ENCODE measurements at regions of chr4 and their contacts with region 1.

Region 1: DNA sequence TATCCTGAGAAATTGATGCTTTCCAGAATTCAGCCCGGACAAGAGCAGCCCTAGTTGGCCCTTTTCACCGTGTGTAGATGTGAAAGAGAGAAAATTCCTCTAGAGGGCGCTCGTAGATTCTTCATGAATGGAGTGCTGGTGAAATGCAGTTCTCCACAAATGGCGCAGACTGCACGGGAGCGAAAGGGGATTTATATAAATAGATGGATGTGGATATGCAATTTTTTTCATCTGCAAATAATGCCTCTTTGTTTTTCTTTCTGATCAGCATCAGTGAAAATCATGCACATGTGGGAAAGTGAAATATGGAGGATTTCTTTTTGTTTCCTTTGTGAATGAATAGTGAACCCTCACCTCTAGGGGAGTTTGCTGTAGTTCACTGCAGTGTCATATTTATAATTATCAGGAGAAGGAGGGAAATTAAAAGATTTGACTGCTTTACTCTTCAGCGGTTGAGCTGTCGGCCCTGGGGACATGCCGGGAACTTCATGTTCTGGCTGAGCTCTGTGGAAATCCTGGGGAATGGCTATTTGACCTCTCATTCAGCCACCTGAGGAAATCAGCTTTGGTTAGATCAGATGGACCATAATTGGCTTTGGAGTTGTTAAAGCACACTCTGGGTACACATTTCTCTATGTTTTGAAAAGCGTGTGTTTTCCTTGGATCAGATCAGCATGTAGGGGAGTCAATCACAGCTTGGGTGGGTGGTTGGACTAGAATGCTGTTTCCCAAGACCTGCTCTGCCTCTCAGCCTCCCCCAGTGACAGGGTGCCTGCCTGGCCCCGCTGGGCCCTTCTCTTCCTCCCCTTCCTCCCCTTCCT is 115.0 kb upstream of the SHISA3 start:
- DNase-seq: peak; percentile 33
- ATAC-seq: peak; percentile 89
- H3K4me3 ChIP-seq: no peak overlapping the region
- H3K27ac ChIP-seq: no peak overlapping the region
- H3K4me1 ChIP-seq: peaks cover 28% of the 10 kb centered on the region
- H3K27me3 ChIP-seq: no peaks in the 10 kb centered on the region
- CTCF ChIP-seq: peak; percentile 66 to 76 (median 74)
- EP300 ChIP-seq: no peak
- POLR2A ChIP-seq: no peak
- RAD21 ChIP-seq: peak; percentile 94

Region 2: DNA sequence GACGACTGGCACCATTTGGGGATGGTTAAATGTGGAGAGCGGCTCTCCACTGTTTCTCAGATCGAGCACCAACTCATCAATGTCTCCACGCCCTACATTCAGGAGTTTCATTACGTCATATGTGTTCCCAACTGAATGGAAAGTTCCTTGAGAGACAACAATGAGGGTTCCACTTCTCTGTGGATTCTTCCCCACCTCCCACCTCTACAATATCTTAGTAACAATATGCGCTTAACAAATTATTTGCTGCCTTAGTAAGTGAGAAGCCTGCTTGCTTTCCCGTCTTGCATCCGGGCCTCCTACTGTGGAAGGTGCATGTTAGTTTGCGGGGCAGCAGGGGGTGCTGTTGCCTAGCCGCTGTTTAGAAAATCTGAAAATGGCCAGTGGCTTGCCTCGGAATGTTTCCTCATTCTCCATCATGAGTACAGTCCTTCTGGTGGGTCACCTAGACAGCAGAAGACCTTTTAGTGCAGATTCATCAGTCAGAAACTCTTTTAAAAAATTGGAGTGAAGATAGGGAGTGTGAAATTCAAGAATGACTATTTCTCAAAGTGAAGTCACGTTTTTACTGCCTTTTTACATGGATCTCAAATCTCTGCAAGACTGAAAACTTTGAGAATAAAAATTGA is 589.5 kb before region 1 on chr4:
- CTCF ChIA-PET with region 1: no interaction called
- POLR2A ChIA-PET with region 1: no interaction called
- RAD21 ChIA-PET with region 1: no interaction called
- SMC1A ChIA-PET with region 1: no interaction called
- in situ Hi-C with region 1: no loop called
- intact Hi-C with region 1: loop called (anchors 5 kb)
- DNase-seq: no peak
- ATAC-seq: peak; percentile 88
- H3K4me3 ChIP-seq: no peak overlapping the region
- H3K27ac ChIP-seq: no peak overlapping the region
- H3K4me1 ChIP-seq: no peaks in the 10 kb centered on the region
- H3K27me3 ChIP-seq: no peaks in the 10 kb centered on the region
- CTCF ChIP-seq: peak; percentile 88 to 94 (median 89)
- EP300 ChIP-seq: no peak
- POLR2A ChIP-seq: no peak
- RAD21 ChIP-seq: peak; percentile 94

Region 3: DNA sequence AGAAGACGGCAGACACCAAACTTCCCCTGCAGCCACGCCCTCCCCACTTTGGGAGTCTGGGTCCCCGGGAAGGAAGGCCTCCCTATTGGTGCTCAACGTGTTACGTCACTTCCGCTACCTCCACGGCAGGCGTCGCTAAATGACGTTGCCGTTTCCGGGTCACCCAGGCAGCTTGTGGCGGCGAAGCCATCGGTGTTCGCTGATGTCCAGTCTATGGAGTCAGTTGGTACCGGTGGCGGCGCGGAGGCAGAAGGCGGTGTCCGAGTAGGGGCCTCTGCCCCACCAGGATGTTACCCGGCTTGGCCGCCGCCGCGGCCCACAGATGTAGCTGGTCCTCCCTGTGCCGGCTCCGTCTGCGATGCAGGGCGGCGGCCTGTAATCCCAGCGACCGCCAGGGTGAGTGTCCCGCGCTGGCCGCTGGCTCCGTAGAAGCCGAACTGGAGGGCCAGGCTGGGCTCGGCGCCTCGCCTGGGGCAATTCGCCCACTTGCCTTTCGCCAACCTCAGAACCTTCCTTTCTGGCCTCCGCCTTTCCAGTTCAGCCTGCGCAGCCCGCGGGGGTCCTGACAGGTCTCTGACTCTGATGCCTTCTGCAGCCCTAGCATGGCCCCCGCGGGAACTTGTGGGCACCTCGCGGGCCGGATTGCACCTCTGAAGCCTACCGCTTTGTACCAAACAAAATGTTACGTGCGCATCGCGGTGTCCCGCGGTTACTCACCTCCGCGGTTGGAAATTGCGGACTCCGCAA is 291.8 kb before region 1 on chr4 and contains the start of gene SLC30A9:
- CTCF ChIA-PET with region 1: interaction called, 3 read pairs
- POLR2A ChIA-PET with region 1: no interaction called
- RAD21 ChIA-PET with region 1: no interaction called
- SMC1A ChIA-PET with region 1: no interaction called
- in situ Hi-C with region 1: no loop called
- intact Hi-C with region 1: loop called (anchors 5 kb)
- DNase-seq: peak; percentile 82
- ATAC-seq: peak; percentile 95
- H3K4me3 ChIP-seq: peak within 1 kb of the TSS; percentile 82
- H3K27ac ChIP-seq: peak within 1 kb of the TSS; percentile 74
- H3K4me1 ChIP-seq: no peaks in the 10 kb centered on the region; the same call in 1 of the 2 replicates
- H3K27me3 ChIP-seq: no peaks in the 10 kb centered on the region
- CTCF ChIP-seq: peak in 2 of 3 experiments; percentile 19 to 36; a peak in 2 of 6 replicates
- EP300 ChIP-seq: 0 out of 4 replicates have a peak, but pooled peaks of 1 of the 2 experiments have one; percentile 45
- POLR2A ChIP-seq: peak; percentile 96
- RAD21 ChIP-seq: no peak
- polyA plus RNA-seq, gene SLC30A9: 12.1 to 15.4 TPM

Region 4: GRCh38 chr4:42396752-42397634 is 114.7 kb after region 1 on chr4 and contains the start of gene SHISA3:
- CTCF ChIA-PET with region 1: interaction called, 4 read pairs
- POLR2A ChIA-PET with region 1: no interaction called
- RAD21 ChIA-PET with region 1: interaction called, 4 read pairs
- SMC1A ChIA-PET with region 1: interaction called, 4 read pairs
- in situ Hi-C with region 1: no loop called
- intact Hi-C with region 1: loop called (anchors 2 kb)
- DNase-seq: no peak
- ATAC-seq: peak; percentile 52
- H3K4me3 ChIP-seq: peak within 1 kb of the TSS; percentile 83
- H3K27ac ChIP-seq: no peak within 1 kb of the TSS
- H3K4me1 ChIP-seq: peaks cover 16% of the 10 kb centered on the region
- H3K27me3 ChIP-seq: peaks cover 2 to 10% of the 10 kb centered on the region in 2 experiments
- CTCF ChIP-seq: no peak
- EP300 ChIP-seq: no peak
- POLR2A ChIP-seq: no peak
- RAD21 ChIP-seq: no peak
- polyA plus RNA-seq, gene SHISA3: 1.9 to 4.6 TPM

Region 5: GRCh38 chr4:42512226-42512625 is 229.9 kb after region 1 on chr4:
- CTCF ChIA-PET with region 1: interaction called, 17 read pairs
- POLR2A ChIA-PET with region 1: no interaction called
- RAD21 ChIA-PET with region 1: interaction called, 6 read pairs
- SMC1A ChIA-PET with region 1: interaction called, 8 read pairs
- in situ Hi-C with region 1: loop called (anchors 5 kb)
- intact Hi-C with region 1: no loop called
- DNase-seq: no peak
- ATAC-seq: no peak
- H3K4me3 ChIP-seq: no peak overlapping the region
- H3K27ac ChIP-seq: no peak overlapping the region
- H3K4me1 ChIP-seq: peaks cover 9% of the 10 kb centered on the region
- H3K27me3 ChIP-seq: no peaks in the 10 kb centered on the region
- CTCF ChIP-seq: no peak
- EP300 ChIP-seq: no peak
- POLR2A ChIP-seq: no peak
- RAD21 ChIP-seq: no peak

Region 6: DNA sequence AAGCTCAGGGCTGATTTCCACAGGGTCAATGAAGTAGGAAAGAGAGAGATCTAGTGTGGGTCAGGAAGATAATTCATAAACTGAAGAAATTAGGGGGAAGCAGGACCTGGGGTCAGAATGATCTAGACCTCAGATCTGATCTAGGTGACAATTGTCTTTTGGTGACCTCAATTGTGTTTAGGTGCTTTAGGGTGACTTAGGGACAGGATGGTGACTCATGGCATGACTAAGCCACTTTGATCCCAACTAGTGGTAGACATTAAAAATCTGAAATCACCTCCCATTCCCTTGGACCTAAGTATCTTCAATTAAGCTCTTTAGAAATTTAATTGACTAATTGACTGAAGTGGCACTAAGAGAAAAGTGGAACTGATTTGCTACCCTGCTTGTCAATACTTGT is 573.5 kb after region 1 on chr4:
- CTCF ChIA-PET with region 1: no interaction called
- POLR2A ChIA-PET with region 1: no interaction called
- RAD21 ChIA-PET with region 1: no interaction called
- SMC1A ChIA-PET with region 1: no interaction called
- in situ Hi-C with region 1: no loop called
- intact Hi-C with region 1: loop called (anchors 10 kb)
- DNase-seq: no peak
- ATAC-seq: no peak
- H3K4me3 ChIP-seq: no peak overlapping the region
- H3K27ac ChIP-seq: no peak overlapping the region
- H3K4me1 ChIP-seq: no peaks in the 10 kb centered on the region
- H3K27me3 ChIP-seq: no peaks in the 10 kb centered on the region
- CTCF ChIP-seq: no peak
- EP300 ChIP-seq: no peak
- POLR2A ChIP-seq: no peak
- RAD21 ChIP-seq: no peak

Measured in GM12878 (cell line).